CD4-positive, alpha-beta T cell (primary cell): ENCODE measurements at regions of chr3 and their contacts with region 1.

Region 1: GRCh38 chr3:134600685-134601463 is 49.9 kb downstream of the KY start:
- DNase-seq: peak in 13 of 14 experiments; percentile 19 to 65 (median 46)
- ATAC-seq: peak; percentile 62
- H3K4me3 ChIP-seq: no peak overlapping the region
- H3K4me3 Mint-ChIP-seq: no peak overlapping the region
- H3K27ac ChIP-seq: no peak overlapping the region
- H3K27ac Mint-ChIP-seq: no peak overlapping the region
- H3K4me1 ChIP-seq: peaks cover 6% of the 10 kb centered on the region
- H3K4me1 Mint-ChIP-seq: peaks cover 7% of the 10 kb centered on the region
- H3K27me3 ChIP-seq: no peaks in the 10 kb centered on the region
- H3K27me3 Mint-ChIP-seq: peaks cover 15% of the 10 kb centered on the region
- CTCF ChIP-seq: peak; percentile 78

Region 2: DNA sequence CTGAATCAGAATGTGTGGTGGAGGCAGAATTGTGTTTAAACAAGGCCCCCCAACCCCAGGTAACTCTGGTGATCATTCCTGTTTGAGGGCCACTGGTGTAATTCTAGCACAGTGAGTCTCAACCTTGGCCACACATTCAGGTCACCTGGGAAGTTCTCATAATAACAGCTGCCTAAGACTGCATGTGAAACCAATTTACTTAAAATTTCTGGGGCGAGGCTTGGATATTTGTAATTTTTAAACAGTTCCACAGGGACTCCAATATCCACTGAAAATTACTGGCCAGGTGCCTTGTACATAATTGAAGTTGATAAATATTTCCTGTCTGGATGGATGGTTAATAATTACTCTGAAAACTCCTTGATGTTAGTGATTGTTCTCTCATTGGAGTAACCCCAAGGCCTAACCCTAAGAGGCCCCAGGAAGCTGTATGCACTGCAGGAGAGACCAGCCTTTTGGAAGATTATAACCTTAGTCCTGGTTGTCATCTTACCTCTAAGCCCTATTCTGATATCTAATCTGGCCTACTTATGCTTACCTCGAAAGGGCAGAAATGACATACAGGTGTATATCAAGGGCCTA is 168.5 kb after region 1 on chr3:
- CTCF ChIA-PET with region 1: no interaction called
- POLR2A ChIA-PET with region 1: no interaction called
- intact Hi-C with region 1: no loop called
- DNase-seq: no peak
- ATAC-seq: no peak
- H3K4me3 ChIP-seq: no peak overlapping the region
- H3K4me3 Mint-ChIP-seq: no peak overlapping the region
- H3K27ac ChIP-seq: no peak overlapping the region
- H3K27ac Mint-ChIP-seq: no peak overlapping the region
- H3K4me1 ChIP-seq: no peaks in the 10 kb centered on the region
- H3K4me1 Mint-ChIP-seq: no peaks in the 10 kb centered on the region
- H3K27me3 ChIP-seq: peaks cover 0 to 2% of the 10 kb centered on the region in 2 experiments
- H3K27me3 Mint-ChIP-seq: no peaks in the 10 kb centered on the region
- CTCF ChIP-seq: no peak

Region 3: GRCh38 chr3:135895106-135895733 is 1294.3 kb after region 1 on chr3:
- CTCF ChIA-PET with region 1: no interaction called
- POLR2A ChIA-PET with region 1: no interaction called
- intact Hi-C with region 1: loop called in 1 of 2 experiments (anchors 5 kb)
- DNase-seq: peak in 9 of 14 experiments; percentile 0 to 48 (median 12)
- ATAC-seq: no peak
- H3K4me3 ChIP-seq: no peak overlapping the region
- H3K4me3 Mint-ChIP-seq: no peak overlapping the region
- H3K27ac ChIP-seq: no peak overlapping the region
- H3K27ac Mint-ChIP-seq: no peak overlapping the region
- H3K4me1 ChIP-seq: no peaks in the 10 kb centered on the region
- H3K4me1 Mint-ChIP-seq: no peaks in the 10 kb centered on the region
- H3K27me3 ChIP-seq: no peaks in the 10 kb centered on the region
- H3K27me3 Mint-ChIP-seq: peaks cover 8% of the 10 kb centered on the region
- CTCF ChIP-seq: peak; percentile 47

Region 4: GRCh38 chr3:136042608-136043221 is 1441.8 kb after region 1 on chr3:
- CTCF ChIA-PET with region 1: interaction called, 5 read pairs
- POLR2A ChIA-PET with region 1: no interaction called
- intact Hi-C with region 1: loop called in 1 of 2 experiments (anchors 5 kb)
- DNase-seq: peak in 3 of 14 experiments; percentile 17 to 20 (median 19)
- ATAC-seq: no peak
- H3K4me3 ChIP-seq: no peak overlapping the region
- H3K4me3 Mint-ChIP-seq: no peak overlapping the region
- H3K27ac ChIP-seq: no peak overlapping the region
- H3K27ac Mint-ChIP-seq: no peak overlapping the region
- H3K4me1 ChIP-seq: no peaks in the 10 kb centered on the region
- H3K4me1 Mint-ChIP-seq: no peaks in the 10 kb centered on the region
- H3K27me3 ChIP-seq: peaks cover 10 to 14% of the 10 kb centered on the region in 2 experiments
- H3K27me3 Mint-ChIP-seq: peaks cover 23% of the 10 kb centered on the region
- CTCF ChIP-seq: peak; percentile 49